ENCODE measurements at regions of chr14 and their contacts with region 1.

Region 1: GRCh38 chr14:100239840-100240724 is 1.1 kb downstream of the YY1 start:
- DNase-seq: peak; percentile 88
- H3K4me3 Mint-ChIP-seq: peak overlapping the region; percentile 86
- H3K27ac Mint-ChIP-seq: peak overlapping the region; percentile 88
- H3K4me1 Mint-ChIP-seq: peaks cover 52% of the 10 kb centered on the region
- H3K27me3 Mint-ChIP-seq: no peaks in the 10 kb centered on the region

Region 2: DNA sequence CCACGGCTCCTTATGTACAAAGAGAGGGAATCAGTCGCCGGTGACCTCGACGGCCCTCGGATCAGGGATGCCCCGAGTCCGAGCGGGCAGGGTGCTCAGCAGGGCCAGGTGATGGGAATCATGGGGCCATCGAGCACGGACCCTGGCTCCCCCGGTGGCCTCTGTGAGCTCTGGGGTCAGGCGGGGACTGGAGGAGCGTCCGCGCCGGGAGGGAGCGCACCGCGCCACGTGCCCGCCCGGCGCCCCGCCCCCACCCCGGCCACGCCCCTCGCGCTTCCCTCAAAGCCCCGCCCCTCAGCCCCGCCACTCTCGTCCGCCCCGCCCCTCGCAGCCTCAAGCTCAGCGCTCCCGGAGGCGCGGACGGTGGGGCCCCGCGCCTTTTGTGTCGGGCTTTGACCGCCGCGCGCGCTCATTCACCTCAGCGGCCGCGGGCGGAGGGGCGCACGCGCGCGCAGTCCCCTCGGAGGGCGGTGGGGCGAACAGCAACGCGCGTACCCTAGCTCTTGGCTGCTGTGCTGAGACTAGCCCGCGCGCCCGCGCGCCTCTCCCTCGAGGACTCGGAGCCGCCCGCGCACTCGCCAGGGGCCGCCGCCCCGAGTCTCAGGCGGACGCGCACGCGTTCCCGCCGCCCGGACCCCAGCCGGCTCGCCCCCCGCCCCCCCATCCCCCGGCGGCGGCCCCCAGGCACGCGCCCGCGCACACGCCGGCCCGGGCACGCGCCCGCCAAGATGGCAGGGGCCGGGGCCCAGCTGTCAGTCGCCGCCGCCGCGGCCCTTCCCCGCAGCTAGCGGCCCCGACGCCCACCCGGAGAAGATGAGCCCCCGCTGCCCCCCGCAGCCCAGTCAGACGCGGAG is 268.8 kb before region 1 on chr14:
- CTCF ChIA-PET with region 1: no interaction called
- intact Hi-C with region 1: loop called (anchors 1 kb)
- DNase-seq: peak; percentile 86
- H3K4me3 Mint-ChIP-seq: peak overlapping the region; percentile 52
- H3K27ac Mint-ChIP-seq: no peak overlapping the region
- H3K4me1 Mint-ChIP-seq: peaks cover 17% of the 10 kb centered on the region
- H3K27me3 Mint-ChIP-seq: peaks cover 12% of the 10 kb centered on the region

Region 3: GRCh38 chr14:100213956-100214774 is 25.9 kb before region 1 on chr14:
- CTCF ChIA-PET with region 1: interaction called, 6 read pairs
- intact Hi-C with region 1: loop called (anchors 1 kb)
- DNase-seq: peak; percentile 92
- H3K4me3 Mint-ChIP-seq: peak overlapping the region; percentile 79
- H3K27ac Mint-ChIP-seq: peak overlapping the region; percentile 86
- H3K4me1 Mint-ChIP-seq: peaks cover 24% of the 10 kb centered on the region
- H3K27me3 Mint-ChIP-seq: no peaks in the 10 kb centered on the region

Region 4: GRCh38 chr14:100263144-100263543 is 23.1 kb after region 1 on chr14:
- CTCF ChIA-PET with region 1: interaction called, 4 read pairs
- intact Hi-C with region 1: loop called (anchors 2 kb)
- DNase-seq: no peak
- H3K4me3 Mint-ChIP-seq: no peak overlapping the region
- H3K27ac Mint-ChIP-seq: peak overlapping the region; percentile 37
- H3K4me1 Mint-ChIP-seq: peaks cover 81% of the 10 kb centered on the region
- H3K27me3 Mint-ChIP-seq: no peaks in the 10 kb centered on the region

Region 5: DNA sequence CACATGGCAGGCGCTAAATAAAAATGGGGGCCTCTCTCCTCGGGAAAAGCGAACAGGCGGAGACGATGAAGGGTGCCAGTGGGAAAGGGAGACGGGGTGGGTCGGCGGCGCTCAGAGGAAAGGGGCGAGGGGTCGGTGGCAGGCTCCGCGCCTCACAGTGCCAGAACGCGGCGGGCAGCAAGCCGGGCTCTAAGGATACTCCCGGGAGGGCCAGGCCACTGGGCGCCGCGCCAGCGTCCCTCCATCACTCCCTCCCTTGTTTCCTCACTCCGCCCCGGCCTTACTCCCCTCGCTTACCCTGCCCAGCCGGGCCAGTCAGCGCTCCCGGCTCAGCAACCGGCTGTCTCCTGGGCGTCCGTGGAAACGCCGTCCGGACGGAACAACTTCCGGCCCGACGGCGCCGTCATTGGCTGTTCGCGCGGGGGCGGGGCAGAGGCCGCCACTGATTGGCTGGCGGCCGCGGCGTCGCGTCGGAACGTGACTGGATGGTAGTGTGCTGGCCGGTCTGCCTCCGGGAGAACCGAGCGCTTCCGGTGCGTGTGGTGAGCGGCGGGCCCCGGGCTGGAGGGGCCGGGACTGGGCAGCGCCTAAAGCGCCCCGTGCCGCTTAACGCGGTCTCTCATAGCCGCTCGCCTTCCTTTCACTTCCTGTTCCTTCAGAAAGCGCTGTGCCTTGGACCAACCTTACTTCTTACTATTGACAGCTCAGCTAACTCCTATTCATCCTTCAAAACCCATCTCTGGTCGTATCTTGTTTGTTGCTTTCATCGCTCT is 136.1 kb after region 1 on chr14:
- CTCF ChIA-PET with region 1: no interaction called
- intact Hi-C with region 1: loop called (anchors 1 kb)
- DNase-seq: peak; percentile 94
- H3K4me3 Mint-ChIP-seq: peak within 1 kb of the TSS; percentile 99
- H3K27ac Mint-ChIP-seq: peak within 1 kb of the TSS; percentile 98
- H3K4me1 Mint-ChIP-seq: peaks cover 45% of the 10 kb centered on the region
- H3K27me3 Mint-ChIP-seq: no peaks in the 10 kb centered on the region

Measured in activated naive CD4-positive, alpha-beta T cell treated with anti-CD3 and anti-CD28 coated beads for 36 hours (primary cell).